ENCODE measurements at regions of chr7 and their contacts with region 1.

Region 1: GRCh38 chr7:55271069-55271626 is 94.0 kb upstream of the LANCL2 start:
- DNase-seq: peak in 1 of 7 donors; percentile 30
- H3K4me3 ChIP-seq: no peak overlapping the region
- H3K27ac ChIP-seq: no peak overlapping the region
- H3K4me1 ChIP-seq: no peaks in the 10 kb centered on the region
- H3K27me3 ChIP-seq: no peaks in the 10 kb centered on the region
- CTCF ChIP-seq: no peak
- POLR2A ChIP-seq: no peak

Region 2: GRCh38 chr7:55365675-55366460 is 94.7 kb after region 1 on chr7:
- intact Hi-C with region 1: loop called in 1 of 2 experiments (anchors 10 kb)
- DNase-seq: peak; percentile 94 to 96 (median 95)
- H3K4me3 ChIP-seq: peak overlapping the region; percentile 60 to 99 (median 94)
- H3K27ac ChIP-seq: peak overlapping the region; percentile 96 to 100 (median 98)
- H3K4me1 ChIP-seq: peaks cover 8 to 20% of the 10 kb centered on the region in 2 donors
- H3K27me3 ChIP-seq: no peaks in the 10 kb centered on the region
- CTCF ChIP-seq: peak in 4 of 6 experiments; percentile 30 to 42 (median 33)
- POLR2A ChIP-seq: peak; percentile 54 to 89